Mucosa of descending colon (tissue), 3 donors: ENCODE measurements at regions of chr12 and their contacts with region 1.

Region 1: GRCh38 chr12:55619354-55620138 is 17.1 kb upstream of the OR10P1 start:
- DNase-seq: peak in 1 of 3 donors; percentile 87
- ATAC-seq: peak; percentile 96
- H3K4me3 ChIP-seq: no peak overlapping the region
- H3K4me1 ChIP-seq: no peaks in the 10 kb centered on the region
- CTCF ChIP-seq: peak; percentile 60

Region 2: GRCh38 chr12:55188974-55189556 is 430.5 kb before region 1 on chr12:
- intact Hi-C with region 1: loop called (anchors 5 kb)
- DNase-seq: peak in 1 of 3 donors; percentile 85
- ATAC-seq: peak; percentile 81
- H3K4me3 ChIP-seq: no peak overlapping the region
- H3K4me1 ChIP-seq: no peaks in the 10 kb centered on the region
- CTCF ChIP-seq: peak; percentile 26

Region 3: DNA sequence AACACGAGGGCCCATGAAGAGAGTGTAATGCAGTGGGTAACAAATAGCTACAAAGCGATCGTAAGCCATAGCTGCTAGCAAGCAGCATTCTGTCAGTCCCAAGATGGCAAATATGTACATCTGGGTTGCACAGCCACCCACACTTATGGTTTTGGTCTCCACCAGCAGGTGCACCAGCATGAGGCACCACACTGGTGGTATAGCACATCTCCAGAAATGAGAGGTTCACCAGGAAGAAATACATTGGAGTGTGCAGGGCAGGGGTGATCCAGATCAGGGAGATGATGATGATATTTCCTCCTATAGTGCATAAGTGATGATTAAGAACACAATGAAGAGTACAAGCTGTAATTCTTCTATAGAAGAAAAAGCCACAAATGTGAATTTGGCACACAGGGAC is 425.2 kb before region 1 on chr12:
- intact Hi-C with region 1: loop called (anchors 5 kb)
- DNase-seq: no peak
- ATAC-seq: no peak
- H3K4me3 ChIP-seq: no peak overlapping the region
- H3K4me1 ChIP-seq: no peaks in the 10 kb centered on the region
- CTCF ChIP-seq: no peak